PC-3 (cell line): ENCODE measurements at regions of chr7 and their contacts with region 1.

Region 1: GRCh38 chr7:43582503-43583423 is at the start of gene STK17A:
- DNase-seq: peak; percentile 92
- ATAC-seq: peak; percentile 72
- H3K4me3 ChIP-seq: peak within 1 kb of the TSS; percentile 95
- H3K27ac ChIP-seq: peak within 1 kb of the TSS; percentile 74
- H3K4me1 ChIP-seq: peaks cover 25% of the 10 kb centered on the region
- H3K27me3 ChIP-seq: no peaks in the 10 kb centered on the region
- CTCF ChIP-seq: peak; percentile 94
- total RNA-seq, gene STK17A: 75.4 and 82.5 TPM in 2 replicates

Region 2: DNA sequence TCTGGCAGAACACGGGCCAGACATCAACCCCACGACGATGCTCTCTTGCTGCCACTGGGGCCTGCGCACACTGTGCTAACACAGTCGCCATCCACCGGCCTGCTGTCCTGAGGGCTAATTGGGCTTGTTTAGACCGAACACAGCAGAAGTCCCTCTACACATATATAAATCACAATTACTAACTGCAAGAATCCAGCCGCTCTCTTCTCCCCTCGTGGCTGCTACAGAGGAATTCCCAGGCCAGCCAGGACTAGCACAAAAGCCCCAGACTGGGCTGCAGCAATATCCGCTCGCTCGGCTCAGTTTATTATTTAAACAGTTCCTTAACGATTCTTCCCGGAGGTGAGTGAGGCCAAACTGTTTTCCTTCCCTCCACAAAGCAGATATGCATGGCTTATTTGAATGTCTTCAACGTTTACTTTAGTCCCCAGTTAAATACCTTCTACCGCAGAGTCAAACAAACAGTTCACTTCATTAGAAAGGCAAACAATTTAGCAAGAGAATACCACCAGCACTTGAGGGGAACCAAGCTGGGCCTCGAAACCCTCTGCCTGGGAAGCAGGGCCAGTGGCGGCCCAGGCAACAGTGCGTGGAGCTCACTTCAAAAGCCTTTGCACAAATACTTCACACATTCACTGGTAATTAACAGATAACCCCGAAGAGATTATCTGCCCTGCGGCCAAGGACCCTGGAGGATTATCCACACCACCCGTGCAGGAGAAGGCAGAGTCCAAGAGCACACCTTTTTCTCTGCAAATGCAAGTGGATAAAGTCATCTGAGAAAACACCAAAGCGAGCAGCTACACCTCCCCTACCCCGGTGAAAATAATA is 1491.1 kb before region 1 on chr7:
- CTCF ChIA-PET with region 1: no interaction called
- POLR2A ChIA-PET with region 1: interaction called, 14 read pairs
- intact Hi-C with region 1: no loop called
- DNase-seq: peak; percentile 81
- ATAC-seq: peak; percentile 77
- H3K4me3 ChIP-seq: no peak overlapping the region
- H3K27ac ChIP-seq: peak overlapping the region; percentile 96
- H3K4me1 ChIP-seq: peaks cover 56% of the 10 kb centered on the region
- H3K27me3 ChIP-seq: no peaks in the 10 kb centered on the region
- CTCF ChIP-seq: no peak

Region 3: DNA sequence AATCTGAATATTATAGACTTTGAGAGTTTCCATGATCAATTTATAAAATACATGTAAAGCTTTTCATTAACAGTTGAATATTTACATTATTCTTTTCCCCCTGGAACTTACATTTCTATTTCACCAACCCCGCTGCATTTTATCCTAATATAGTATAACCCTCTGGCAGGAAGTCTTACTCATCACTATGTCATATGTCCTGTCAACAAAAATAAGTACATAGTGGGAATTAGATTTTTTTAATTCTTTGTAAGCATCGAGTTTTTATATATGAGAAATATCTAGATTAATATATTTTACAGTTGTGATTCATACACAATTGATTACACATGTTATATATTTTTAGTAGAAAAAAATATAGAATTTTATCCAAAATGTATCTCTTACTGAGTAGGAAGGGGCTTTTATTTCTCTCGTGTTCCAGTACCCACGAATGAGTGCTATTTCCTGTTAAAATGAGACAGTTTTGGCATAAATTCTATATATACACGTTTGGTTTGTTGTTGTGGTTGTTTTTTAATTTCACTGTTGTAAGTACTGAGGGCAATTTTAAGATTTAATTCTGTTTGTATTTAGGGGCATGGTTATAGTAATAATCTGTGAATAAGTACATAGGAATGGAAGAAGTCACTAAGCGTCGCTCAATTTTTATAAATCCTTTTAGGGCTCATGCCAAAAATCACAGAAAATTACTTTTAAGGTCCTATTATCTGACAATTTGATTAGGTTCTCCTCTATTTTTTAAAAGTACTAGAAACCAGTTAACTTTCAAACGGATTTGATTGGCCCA is 383.2 kb before region 1 on chr7:
- CTCF ChIA-PET with region 1: no interaction called
- POLR2A ChIA-PET with region 1: interaction called, 12 read pairs
- intact Hi-C with region 1: no loop called
- DNase-seq: peak; percentile 61
- ATAC-seq: peak; percentile 84
- H3K4me3 ChIP-seq: peak overlapping the region; percentile 15; the same call in 1 of the 2 replicates
- H3K27ac ChIP-seq: peak overlapping the region; percentile 24
- H3K4me1 ChIP-seq: peaks cover 32% of the 10 kb centered on the region
- H3K27me3 ChIP-seq: no peaks in the 10 kb centered on the region
- CTCF ChIP-seq: no peak

Region 4: GRCh38 chr7:43232366-43232765 is 350.4 kb before region 1 on chr7:
- CTCF ChIA-PET with region 1: no interaction called
- POLR2A ChIA-PET with region 1: no interaction called
- intact Hi-C with region 1: no loop called
- DNase-seq: no peak
- ATAC-seq: no peak
- H3K4me3 ChIP-seq: no peak overlapping the region
- H3K27ac ChIP-seq: no peak overlapping the region
- H3K4me1 ChIP-seq: no peaks in the 10 kb centered on the region
- H3K27me3 ChIP-seq: no peaks in the 10 kb centered on the region; the same call in 1 of the 2 replicates
- CTCF ChIP-seq: no peak

Region 5: DNA sequence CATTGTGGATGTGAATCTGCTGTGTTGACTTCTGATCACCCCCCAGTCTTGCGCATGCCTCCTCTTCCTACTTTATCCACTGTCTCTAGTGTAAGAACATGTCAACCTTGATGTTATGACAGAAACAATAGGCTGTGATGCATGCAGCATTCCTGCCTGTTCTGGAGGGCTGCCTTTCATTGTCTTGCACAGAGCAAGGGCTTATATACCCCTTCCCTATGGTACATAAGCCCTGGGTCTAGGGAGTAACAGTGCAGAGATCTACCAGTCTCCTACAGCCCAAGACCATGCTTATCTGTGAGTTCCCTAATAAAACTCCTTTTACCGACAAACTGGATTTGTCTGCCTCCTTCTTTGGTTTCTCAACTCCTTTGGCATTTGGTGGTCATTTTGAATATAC is 176.8 kb before region 1 on chr7:
- CTCF ChIA-PET with region 1: no interaction called
- POLR2A ChIA-PET with region 1: no interaction called
- intact Hi-C with region 1: no loop called
- DNase-seq: no peak
- ATAC-seq: no peak
- H3K4me3 ChIP-seq: no peak overlapping the region
- H3K27ac ChIP-seq: no peak overlapping the region
- H3K4me1 ChIP-seq: no peaks in the 10 kb centered on the region
- H3K27me3 ChIP-seq: no peaks in the 10 kb centered on the region
- CTCF ChIP-seq: no peak

Region 6: GRCh38 chr7:43511029-43511428 is 71.7 kb before region 1 on chr7:
- CTCF ChIA-PET with region 1: no interaction called
- POLR2A ChIA-PET with region 1: no interaction called
- intact Hi-C with region 1: no loop called
- DNase-seq: peak; percentile 15
- ATAC-seq: no peak
- H3K4me3 ChIP-seq: no peak overlapping the region
- H3K27ac ChIP-seq: no peak overlapping the region
- H3K4me1 ChIP-seq: no peaks in the 10 kb centered on the region
- H3K27me3 ChIP-seq: no peaks in the 10 kb centered on the region
- CTCF ChIP-seq: peak; percentile 23; the same call in 1 of the 2 replicates

Region 7: DNA sequence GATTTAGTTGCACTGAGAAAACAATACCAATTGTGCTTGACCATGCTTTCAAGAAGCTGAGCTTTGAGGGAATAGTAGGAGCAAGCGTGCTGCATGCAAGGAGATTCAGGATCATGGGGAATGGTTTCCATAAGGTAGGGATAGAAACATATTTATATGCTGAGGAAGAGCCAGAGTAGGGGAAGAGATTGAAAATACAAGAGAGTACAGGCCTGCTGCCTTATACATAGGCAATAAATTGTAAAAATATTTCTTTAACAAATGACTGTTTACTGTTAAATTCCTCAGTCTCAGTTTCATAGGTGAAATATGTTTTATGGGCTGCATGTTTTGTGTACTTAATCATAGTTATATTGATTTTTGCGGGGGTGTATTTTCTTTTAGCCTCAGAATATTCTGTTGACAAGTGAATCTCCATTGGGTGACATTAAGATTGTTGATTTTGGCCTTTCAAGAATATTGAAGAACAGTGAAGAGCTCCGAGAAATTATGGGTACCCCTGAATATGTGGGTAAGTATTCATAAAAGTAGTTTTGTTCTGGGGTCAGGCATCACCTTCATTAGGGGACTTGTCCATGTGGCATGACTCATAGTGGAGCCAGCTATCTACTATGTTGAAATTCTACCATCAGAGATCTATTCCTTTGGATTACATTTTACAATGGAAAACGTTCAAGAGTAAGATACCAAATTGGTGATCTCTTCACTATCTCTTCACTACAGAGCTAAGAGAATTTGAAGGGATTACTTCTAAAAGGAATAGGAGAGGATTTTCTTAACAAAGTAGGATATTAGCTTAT is 36.6 kb after region 1 on chr7:
- CTCF ChIA-PET with region 1: interaction called, 12 read pairs
- POLR2A ChIA-PET with region 1: interaction called, 10 read pairs
- intact Hi-C with region 1: loop called (anchors 2 kb)
- DNase-seq: peak; percentile 57
- ATAC-seq: peak; percentile 87
- H3K4me3 ChIP-seq: no peak overlapping the region
- H3K27ac ChIP-seq: peak overlapping the region; percentile 14
- H3K4me1 ChIP-seq: peaks cover 35% of the 10 kb centered on the region
- H3K27me3 ChIP-seq: no peaks in the 10 kb centered on the region
- CTCF ChIP-seq: no peak

Region 8: DNA sequence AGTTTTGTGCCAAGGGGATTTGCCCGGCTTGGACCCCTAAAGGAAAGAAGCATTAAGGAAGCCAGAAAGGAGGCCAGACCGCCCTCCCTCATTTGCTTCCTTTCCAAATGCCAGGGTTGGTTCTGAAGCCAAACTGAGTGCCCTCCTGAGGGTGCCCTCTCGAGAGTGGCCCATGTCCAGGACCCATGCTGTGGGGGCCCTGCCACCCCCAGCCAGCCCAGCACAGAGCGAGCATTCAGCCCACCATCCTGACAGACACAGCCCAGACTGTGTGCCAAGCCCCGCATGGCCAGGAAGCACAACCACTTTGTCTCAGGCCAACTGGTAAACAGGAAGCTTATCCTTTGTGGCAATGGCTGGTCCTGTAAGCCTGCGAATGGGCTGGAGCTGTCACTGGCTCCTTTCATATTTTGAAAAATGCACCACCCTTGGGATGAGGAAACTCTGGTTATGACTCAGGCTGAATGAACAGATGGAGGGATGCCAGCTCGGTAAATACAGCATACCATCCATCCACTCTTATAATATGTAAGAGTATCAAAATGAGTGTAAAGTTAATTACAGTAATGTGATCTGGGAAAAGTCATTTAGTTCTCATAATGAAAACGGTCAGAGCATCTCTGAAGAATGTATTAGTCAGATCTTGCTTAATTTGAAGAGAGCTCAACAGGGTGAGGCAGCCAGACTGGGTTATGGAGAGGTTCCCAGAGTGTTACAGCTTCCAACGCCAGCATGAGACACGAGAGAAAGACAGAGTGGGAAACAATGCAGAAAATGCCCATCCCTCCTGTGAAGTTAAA is 65.1 kb after region 1 on chr7:
- CTCF ChIA-PET with region 1: interaction called, 13 read pairs
- POLR2A ChIA-PET with region 1: interaction called, 45 read pairs
- intact Hi-C with region 1: loop called (anchors 1 kb)
- DNase-seq: peak; percentile 98
- ATAC-seq: peak; percentile 64
- H3K4me3 ChIP-seq: peak overlapping the region; percentile 33; the same call in 1 of the 2 replicates
- H3K27ac ChIP-seq: peak overlapping the region; percentile 99
- H3K4me1 ChIP-seq: peaks cover 73% of the 10 kb centered on the region
- H3K27me3 ChIP-seq: no peaks in the 10 kb centered on the region
- CTCF ChIP-seq: no peak

Region 9: GRCh38 chr7:43693687-43694398 is 111.1 kb after region 1 on chr7:
- CTCF ChIA-PET with region 1: interaction called, 167 read pairs
- POLR2A ChIA-PET with region 1: interaction called, 120 read pairs
- intact Hi-C with region 1: no loop called
- DNase-seq: peak; percentile 66
- ATAC-seq: peak; percentile 44
- H3K4me3 ChIP-seq: no peak overlapping the region
- H3K27ac ChIP-seq: peak overlapping the region; percentile 75
- H3K4me1 ChIP-seq: peaks cover 56% of the 10 kb centered on the region
- H3K27me3 ChIP-seq: no peaks in the 10 kb centered on the region
- CTCF ChIP-seq: no peak

Region 10: DNA sequence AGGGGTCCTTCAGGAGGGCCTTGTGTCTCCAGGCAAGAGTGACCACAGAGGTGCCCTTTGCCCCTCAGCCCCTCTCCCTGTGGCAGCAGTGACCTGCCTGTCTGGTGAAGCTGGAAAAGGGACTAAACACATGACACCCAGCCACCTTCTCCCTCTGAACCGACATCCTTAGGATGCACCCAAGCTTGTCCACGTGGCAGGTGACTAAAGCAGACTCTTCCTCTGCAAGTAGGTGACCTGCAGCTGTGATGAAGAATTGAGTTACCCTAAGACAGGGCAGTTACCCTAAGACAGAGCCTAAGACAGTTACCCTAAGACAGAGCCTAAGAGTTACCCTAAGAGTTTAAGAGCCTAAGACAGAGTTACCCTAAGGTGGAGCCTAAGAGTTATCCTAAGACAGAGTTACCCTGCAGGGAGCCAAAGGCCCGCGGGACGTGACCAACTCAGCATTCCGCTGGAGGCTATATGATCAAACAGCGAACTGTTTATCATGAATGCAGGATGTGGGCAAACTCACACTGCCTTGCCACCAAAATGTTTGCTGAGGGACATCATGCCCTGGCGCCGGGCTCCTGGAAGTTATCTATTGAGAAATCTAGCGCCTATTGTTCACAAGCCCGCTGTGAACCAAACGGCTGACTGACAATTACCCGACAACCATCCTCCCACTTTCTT is 225.5 kb after region 1 on chr7:
- CTCF ChIA-PET with region 1: interaction called, 5 read pairs
- POLR2A ChIA-PET with region 1: interaction called, 28 read pairs
- intact Hi-C with region 1: no loop called
- DNase-seq: no peak
- ATAC-seq: peak; percentile 20; the same call in 1 of the 2 replicates
- H3K4me3 ChIP-seq: no peak overlapping the region
- H3K27ac ChIP-seq: no peak overlapping the region
- H3K4me1 ChIP-seq: no peaks in the 10 kb centered on the region
- H3K27me3 ChIP-seq: no peaks in the 10 kb centered on the region
- CTCF ChIP-seq: no peak